ENCODE measurements at regions of chr20 and their contacts with region 1.

Region 1: GRCh38 chr20:43736588-43737158 is 9.9 kb upstream of the GTSF1L start:
- DNase-seq: no peak
- ATAC-seq: peak; percentile 34 to 44
- H3K4me3 Mint-ChIP-seq: no peak overlapping the region
- H3K27ac Mint-ChIP-seq: peak overlapping the region in 4 of 10 donors; percentile 1 to 21 (median 19)
- H3K4me1 Mint-ChIP-seq: peaks cover 16 to 29% (median 25%) of the 10 kb centered on the region in 4 donors
- H3K27me3 Mint-ChIP-seq: no peaks in the 10 kb centered on the region

Region 2: GRCh38 chr20:43721429-43722152 is 15.1 kb before region 1 on chr20:
- POLR2A ChIA-PET with region 1: interaction called, 10 read pairs
- DNase-seq: peak in 1 of 10 donors; percentile 23
- ATAC-seq: no peak
- H3K4me3 Mint-ChIP-seq: peak overlapping the region; percentile 56 to 81 (median 73)
- H3K27ac Mint-ChIP-seq: peak overlapping the region in 9 of 10 donors; percentile 26 to 93 (median 84)
- H3K4me1 Mint-ChIP-seq: peaks cover 27 to 86% (median 68%) of the 10 kb centered on the region in 4 donors
- H3K27me3 Mint-ChIP-seq: no peaks in the 10 kb centered on the region

Region 3: DNA sequence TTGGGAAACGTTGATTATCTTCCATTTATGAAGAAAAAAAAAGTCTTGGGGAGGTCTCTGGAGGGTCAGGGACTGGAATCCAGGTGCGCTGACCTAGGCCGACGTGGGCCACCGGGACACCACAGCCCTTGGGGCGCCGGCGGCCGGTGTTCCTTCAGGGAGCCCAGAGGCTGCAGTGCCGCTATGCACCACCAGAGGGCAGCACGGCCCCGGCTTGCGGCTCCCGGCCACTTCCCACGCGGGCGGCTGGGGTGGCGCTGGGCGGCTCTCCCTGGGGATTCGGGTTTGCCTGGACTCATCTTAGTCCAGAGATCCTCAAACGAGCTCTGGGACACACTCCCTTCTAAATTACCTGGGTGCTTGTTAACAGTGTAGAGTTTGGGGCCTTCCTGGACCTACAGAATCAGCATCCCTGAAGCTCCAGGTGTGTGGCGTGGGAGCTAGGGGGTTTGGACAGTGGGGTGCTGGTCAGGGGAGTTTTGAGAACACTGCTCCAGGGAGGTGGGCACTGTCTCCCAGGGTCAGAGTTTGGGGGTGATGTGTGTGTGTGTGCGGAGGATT is 13.1 kb after region 1 on chr20:
- POLR2A ChIA-PET with region 1: no interaction called
- DNase-seq: peak; percentile 46 to 87 (median 77)
- ATAC-seq: peak; percentile 78 to 93
- H3K4me3 Mint-ChIP-seq: peak overlapping the region in 3 of 10 donors; percentile 23 to 47 (median 42)
- H3K27ac Mint-ChIP-seq: peak overlapping the region in 7 of 10 donors; percentile 20 to 78 (median 53)
- H3K4me1 Mint-ChIP-seq: peaks cover 19 to 52% (median 25%) of the 10 kb centered on the region in 4 donors
- H3K27me3 Mint-ChIP-seq: peaks cover 0 to 18% (median 10%) of the 10 kb centered on the region in 5 donors

Region 4: DNA sequence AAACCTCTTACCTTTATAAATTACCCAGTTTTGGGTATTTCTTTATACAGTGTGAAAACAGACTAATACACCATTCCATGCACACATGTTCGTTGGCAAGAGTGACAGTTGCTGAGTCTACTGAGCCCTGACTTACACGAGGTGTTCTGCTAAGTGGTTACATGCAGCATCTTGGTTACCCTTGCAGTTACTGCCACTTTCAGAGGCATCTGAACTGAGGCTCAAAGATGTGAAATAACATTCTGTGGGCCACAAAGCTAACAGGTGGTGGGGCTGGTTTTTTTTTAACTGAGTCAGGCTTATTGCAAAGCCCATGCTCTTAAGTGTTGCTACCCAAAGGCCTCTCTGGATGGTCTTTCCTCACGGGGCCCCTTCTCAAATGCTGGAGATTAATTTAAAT is 44.5 kb after region 1 on chr20:
- POLR2A ChIA-PET with region 1: no interaction called
- DNase-seq: no peak
- ATAC-seq: no peak
- H3K4me3 Mint-ChIP-seq: no peak overlapping the region
- H3K27ac Mint-ChIP-seq: peak overlapping the region in 4 of 10 donors; percentile 27 to 69 (median 36)
- H3K4me1 Mint-ChIP-seq: peaks cover 0 to 19% (median 19%) of the 10 kb centered on the region in 4 donors
- H3K27me3 Mint-ChIP-seq: peaks cover 0 to 1% (median 0%) of the 10 kb centered on the region in 5 donors

Region 5: GRCh38 chr20:43949741-43950618 is 213.3 kb after region 1 on chr20:
- POLR2A ChIA-PET with region 1: no interaction called
- DNase-seq: peak; percentile 45 to 83 (median 69)
- ATAC-seq: peak; percentile 97
- H3K4me3 Mint-ChIP-seq: peak overlapping the region; percentile 53 to 79 (median 74)
- H3K27ac Mint-ChIP-seq: peak overlapping the region in 7 of 10 donors; percentile 2 to 61 (median 40)
- H3K4me1 Mint-ChIP-seq: peaks cover 50 to 88% (median 86%) of the 10 kb centered on the region in 4 donors
- H3K27me3 Mint-ChIP-seq: peaks cover 3 to 54% (median 23%) of the 10 kb centered on the region in 5 donors

Measured in naive thymus-derived CD8-positive, alpha-beta T cell (primary cell).